Heart right ventricle (tissue), 16 donors: ENCODE measurements at regions of chr14 and their contacts with region 1.

Region 1: GRCh38 chr14:33792720-33793368 is 158.0 kb downstream of the EGLN3 start:
- DNase-seq: peak; percentile 83
- ATAC-seq: peak; percentile 85 to 95 (median 88)
- H3K4me3 ChIP-seq: peak overlapping the region in 7 of 10 donors; percentile 1 to 44 (median 34)
- H3K27ac ChIP-seq: peak overlapping the region in 1 of 10 donors; percentile 41
- H3K4me1 ChIP-seq: peaks cover 0 to 27% (median 7%) of the 10 kb centered on the region in 9 donors
- H3K27me3 ChIP-seq: peaks cover 0 to 8% (median 0%) of the 10 kb centered on the region in 7 donors
- CTCF ChIP-seq: peak; percentile 84 to 98 (median 95)

Region 2: GRCh38 chr14:33184587-33184986 is 608.3 kb before region 1 on chr14:
- intact Hi-C with region 1: loop called in 1 of 10 experiments (anchors 10 kb)
- DNase-seq: no peak
- ATAC-seq: no peak
- H3K4me3 ChIP-seq: no peak overlapping the region
- H3K27ac ChIP-seq: no peak overlapping the region
- H3K4me1 ChIP-seq: no peaks in the 10 kb centered on the region
- H3K27me3 ChIP-seq: peaks cover 0 to 14% (median 0%) of the 10 kb centered on the region in 7 donors
- CTCF ChIP-seq: peak in 5 of 9 donors; percentile 10 to 38 (median 18)

Region 3: DNA sequence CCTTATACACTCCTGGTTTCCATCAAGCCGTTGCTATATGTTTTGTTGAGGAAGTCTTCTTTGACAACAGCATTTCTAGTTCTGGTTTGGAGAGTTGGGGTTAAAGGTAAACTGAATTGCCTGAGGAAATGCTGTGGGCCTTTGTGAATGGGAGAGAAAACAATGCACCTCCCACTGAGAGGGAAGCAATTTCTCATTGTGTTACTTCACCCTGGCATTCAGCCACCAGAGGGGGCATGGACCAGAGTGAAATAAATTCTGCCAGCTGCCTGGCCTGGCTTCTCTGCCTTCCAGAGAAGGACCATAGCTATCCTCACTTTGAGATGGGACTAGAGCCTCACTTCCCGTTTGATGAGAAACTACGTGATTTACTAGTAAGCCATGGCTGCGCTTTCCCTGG is 317.2 kb before region 1 on chr14:
- intact Hi-C with region 1: loop called in 2 of 10 experiments (anchors 5 to 10 kb)
- DNase-seq: peak in 1 of 2 donors; percentile 10
- ATAC-seq: peak in 1 of 8 donors; percentile 56
- H3K4me3 ChIP-seq: no peak overlapping the region
- H3K27ac ChIP-seq: no peak overlapping the region
- H3K4me1 ChIP-seq: no peaks in the 10 kb centered on the region
- H3K27me3 ChIP-seq: no peaks in the 10 kb centered on the region
- CTCF ChIP-seq: peak in 7 of 9 donors; percentile 11 to 46 (median 31)

Region 4: GRCh38 chr14:33676135-33676566 is 116.7 kb before region 1 on chr14:
- intact Hi-C with region 1: loop called in 6 of 10 experiments (anchors 2 to 10 kb)
- DNase-seq: peak; percentile 24 to 40
- ATAC-seq: peak; percentile 38 to 86 (median 66)
- H3K4me3 ChIP-seq: peak overlapping the region in 8 of 10 donors; percentile 8 to 42 (median 28)
- H3K27ac ChIP-seq: peak overlapping the region in 1 of 10 donors; percentile 3
- H3K4me1 ChIP-seq: no peaks in the 10 kb centered on the region
- H3K27me3 ChIP-seq: no peaks in the 10 kb centered on the region
- CTCF ChIP-seq: peak in 8 of 9 donors; percentile 21 to 59 (median 42)

Region 5: DNA sequence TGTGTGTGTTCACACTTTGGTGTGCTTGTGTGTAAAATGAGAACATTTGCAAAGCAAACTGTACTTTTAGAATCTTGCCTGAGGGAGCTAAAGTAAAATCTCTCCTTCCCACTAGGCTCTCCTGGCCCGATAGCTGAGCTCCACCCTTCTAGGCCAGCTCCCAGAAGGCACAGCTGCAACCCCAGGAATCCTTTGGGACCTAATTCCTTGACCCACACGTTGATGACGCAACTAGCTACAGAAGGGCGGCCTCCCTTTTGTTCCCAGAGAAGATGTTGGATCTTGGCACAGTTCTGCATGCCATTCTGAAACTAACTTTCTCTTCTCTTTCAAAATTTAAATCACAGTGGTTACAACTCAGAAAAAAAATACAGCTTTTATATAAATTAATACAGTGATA is 110.1 kb before region 1 on chr14:
- intact Hi-C with region 1: loop called in 6 of 10 experiments (anchors 2 to 10 kb)
- DNase-seq: peak; percentile 56 to 66
- ATAC-seq: peak in 7 of 8 donors; percentile 86 to 98 (median 95)
- H3K4me3 ChIP-seq: no peak overlapping the region
- H3K27ac ChIP-seq: peak overlapping the region in 2 of 10 donors; percentile 44 to 62
- H3K4me1 ChIP-seq: peaks cover 0 to 14% (median 9%) of the 10 kb centered on the region in 9 donors
- H3K27me3 ChIP-seq: no peaks in the 10 kb centered on the region
- CTCF ChIP-seq: no peak

Region 6: DNA sequence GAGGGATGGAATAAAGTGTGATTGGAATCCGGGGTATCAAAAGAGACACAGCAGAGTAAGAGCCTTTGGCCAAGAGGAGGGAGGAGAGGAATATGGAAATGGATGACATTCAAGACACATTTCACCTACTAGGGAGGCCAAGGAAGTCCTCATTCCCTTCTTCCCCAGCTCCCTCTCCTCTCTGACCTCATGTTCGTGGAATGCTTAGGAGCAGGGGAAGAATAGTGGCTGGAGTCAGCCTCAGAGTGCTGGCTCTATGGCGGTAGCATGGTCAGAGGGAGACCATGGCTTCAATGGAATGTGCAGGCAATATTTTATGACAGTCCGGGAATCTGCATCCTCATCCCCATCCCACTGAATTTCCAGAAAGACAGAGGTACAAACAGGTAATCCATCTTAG is 38.6 kb before region 1 on chr14:
- intact Hi-C with region 1: no loop called
- DNase-seq: no peak
- ATAC-seq: no peak
- H3K4me3 ChIP-seq: no peak overlapping the region
- H3K27ac ChIP-seq: no peak overlapping the region
- H3K4me1 ChIP-seq: no peaks in the 10 kb centered on the region
- H3K27me3 ChIP-seq: no peaks in the 10 kb centered on the region
- CTCF ChIP-seq: no peak

Region 7: DNA sequence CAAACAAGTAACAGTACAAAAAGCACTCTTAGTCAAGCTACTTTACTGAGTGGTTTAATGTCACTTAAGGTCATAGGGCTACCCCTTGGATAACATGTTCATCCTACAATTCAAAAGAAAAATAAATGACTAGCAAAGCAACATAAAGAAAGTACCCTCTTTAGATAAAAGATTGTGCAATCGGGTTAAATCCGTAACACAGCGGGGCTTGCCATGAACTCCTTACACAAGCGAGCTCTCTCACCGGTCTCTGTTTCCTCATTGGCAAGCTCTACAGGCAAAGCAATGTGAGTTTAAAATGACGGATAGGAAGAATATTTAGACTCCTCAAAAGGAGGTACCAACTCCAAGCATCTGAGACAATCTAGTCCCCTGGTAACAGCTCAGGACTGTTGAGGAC is 17.5 kb after region 1 on chr14:
- intact Hi-C with region 1: no loop called
- DNase-seq: no peak
- ATAC-seq: no peak
- H3K4me3 ChIP-seq: no peak overlapping the region
- H3K27ac ChIP-seq: no peak overlapping the region
- H3K4me1 ChIP-seq: no peaks in the 10 kb centered on the region
- H3K27me3 ChIP-seq: peaks cover 0 to 8% (median 0%) of the 10 kb centered on the region in 7 donors
- CTCF ChIP-seq: no peak

Region 8: DNA sequence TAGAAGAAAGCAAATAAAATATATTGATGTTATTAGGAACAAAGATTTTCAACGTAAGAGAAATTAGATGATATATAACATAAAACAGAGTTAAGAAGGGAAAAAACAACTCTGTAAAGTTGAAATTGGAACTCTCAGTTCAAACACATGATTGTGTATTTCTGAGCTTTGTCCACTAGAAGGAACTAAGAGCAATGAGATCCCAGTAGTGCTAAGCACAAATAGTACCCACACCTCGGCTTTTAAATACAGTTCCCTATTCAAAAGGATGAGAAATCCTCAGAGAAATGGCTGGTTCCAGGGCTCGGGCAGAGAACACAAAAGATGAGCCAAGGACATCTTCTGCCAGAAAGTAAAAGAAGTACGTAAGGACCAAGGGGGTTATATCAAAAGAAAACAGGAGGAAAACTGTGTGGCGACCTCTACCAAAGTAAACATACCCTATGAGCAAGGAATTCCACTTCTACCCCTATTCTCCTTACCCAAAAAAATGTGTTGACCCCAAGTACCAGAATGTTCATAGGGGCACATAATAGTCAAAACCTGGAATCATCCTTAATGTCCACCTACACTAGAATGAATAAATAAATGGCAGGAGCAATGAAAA is 572.6 kb after region 1 on chr14:
- intact Hi-C with region 1: no loop called
- DNase-seq: no peak
- ATAC-seq: no peak
- H3K4me3 ChIP-seq: no peak overlapping the region
- H3K27ac ChIP-seq: no peak overlapping the region
- H3K4me1 ChIP-seq: peaks cover 0 to 40% (median 3%) of the 10 kb centered on the region in 9 donors
- H3K27me3 ChIP-seq: peaks cover 0 to 6% (median 0%) of the 10 kb centered on the region in 7 donors
- CTCF ChIP-seq: peak in 7 of 9 donors; percentile 12 to 45 (median 15)